ENCODE measurements at regions of chr9 and their contacts with region 1.

Region 1: DNA sequence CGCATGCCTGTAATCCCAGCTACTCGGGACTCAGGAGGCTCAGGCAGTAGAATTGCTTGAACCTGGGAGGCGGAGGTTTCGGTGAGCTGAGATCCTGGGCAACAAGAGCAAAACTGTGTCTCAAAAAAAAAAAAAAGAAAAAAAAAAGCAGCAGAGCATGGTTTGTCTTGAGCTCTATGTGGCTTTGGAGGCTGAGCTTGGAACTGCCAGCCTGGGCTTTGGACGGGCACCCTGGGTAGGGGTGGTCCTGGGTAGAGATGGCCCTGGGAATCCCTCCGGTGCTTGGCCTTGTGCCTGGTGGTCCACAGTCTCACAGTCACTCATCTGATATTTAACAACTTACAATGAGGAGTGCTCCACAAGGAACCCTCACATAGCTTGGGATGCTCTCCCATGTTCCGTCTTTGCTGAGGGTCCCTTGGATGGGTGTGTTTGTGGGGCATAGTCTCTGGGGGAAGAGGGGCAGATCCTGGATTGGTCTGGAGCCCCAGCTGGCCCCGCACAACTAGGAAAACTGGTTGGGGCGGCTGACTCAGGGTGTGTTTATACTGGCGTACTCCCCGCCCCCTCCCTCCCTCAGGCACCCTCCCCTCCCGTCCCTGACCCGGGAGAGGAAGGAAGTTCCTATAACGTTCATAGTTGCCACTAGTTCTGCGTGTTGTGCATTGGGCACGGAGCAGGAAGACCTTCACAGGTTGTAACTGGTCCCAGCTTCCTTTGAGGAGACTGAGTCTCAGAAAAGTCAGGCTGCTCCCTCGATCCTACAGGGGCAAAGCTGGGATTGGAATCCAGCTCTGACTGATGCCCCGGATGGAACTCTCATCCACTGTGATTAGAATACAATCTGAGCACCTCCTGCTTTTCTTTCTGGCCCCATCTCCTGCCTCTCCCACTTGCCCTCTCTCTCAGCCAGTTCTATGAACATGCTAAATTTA is 11.2 kb downstream of the IER5L start:
- DNase-seq: peak; percentile 89 to 90
- H3K4me3 ChIP-seq: peak overlapping the region; percentile 56; the same call in 1 of the 2 replicates
- H3K27ac ChIP-seq: peak overlapping the region; percentile 90
- H3K4me1 ChIP-seq: peaks cover 43% of the 10 kb centered on the region
- H3K27me3 ChIP-seq: no peaks in the 10 kb centered on the region
- CTCF ChIP-seq: no peak

Region 2: GRCh38 chr9:129071526-129072131 is 95.3 kb before region 1 on chr9:
- CTCF ChIA-PET with region 1: no interaction called
- POLR2A ChIA-PET with region 1: no interaction called
- intact Hi-C with region 1: no loop called
- DNase-seq: peak in 1 of 2 experiments; percentile 29
- H3K4me3 ChIP-seq: no peak overlapping the region
- H3K27ac ChIP-seq: no peak overlapping the region
- H3K4me1 ChIP-seq: no peaks in the 10 kb centered on the region
- H3K27me3 ChIP-seq: no peaks in the 10 kb centered on the region
- CTCF ChIP-seq: no peak

Region 3: DNA sequence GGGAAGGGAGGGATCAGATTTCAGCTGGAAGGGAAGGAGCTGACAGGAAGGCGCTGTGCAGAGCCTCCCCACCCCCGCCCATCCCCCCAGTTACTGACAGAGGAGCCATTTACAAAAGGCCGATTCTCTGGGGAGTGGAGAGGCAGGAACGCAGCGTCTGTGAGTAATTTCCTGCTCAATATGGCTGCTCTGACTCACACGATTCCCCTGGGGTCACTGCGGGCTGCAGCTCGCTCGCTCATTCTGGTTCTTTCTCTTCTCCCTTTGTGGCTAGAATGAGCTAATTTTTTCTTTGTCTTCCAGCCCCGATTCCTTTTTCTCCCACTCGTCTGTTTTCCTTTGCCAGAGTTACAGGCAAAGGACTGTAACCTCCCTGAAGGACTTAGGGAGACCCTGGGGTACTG is 26.9 kb before region 1 on chr9:
- CTCF ChIA-PET with region 1: interaction called, 36 read pairs
- POLR2A ChIA-PET with region 1: interaction called, 21 read pairs
- intact Hi-C with region 1: loop called (anchors 1 kb)
- DNase-seq: peak; percentile 85 to 95
- H3K4me3 ChIP-seq: peak overlapping the region; percentile 91
- H3K27ac ChIP-seq: peak overlapping the region; percentile 100
- H3K4me1 ChIP-seq: peaks cover 43% of the 10 kb centered on the region
- H3K27me3 ChIP-seq: no peaks in the 10 kb centered on the region
- CTCF ChIP-seq: no peak

Region 4: DNA sequence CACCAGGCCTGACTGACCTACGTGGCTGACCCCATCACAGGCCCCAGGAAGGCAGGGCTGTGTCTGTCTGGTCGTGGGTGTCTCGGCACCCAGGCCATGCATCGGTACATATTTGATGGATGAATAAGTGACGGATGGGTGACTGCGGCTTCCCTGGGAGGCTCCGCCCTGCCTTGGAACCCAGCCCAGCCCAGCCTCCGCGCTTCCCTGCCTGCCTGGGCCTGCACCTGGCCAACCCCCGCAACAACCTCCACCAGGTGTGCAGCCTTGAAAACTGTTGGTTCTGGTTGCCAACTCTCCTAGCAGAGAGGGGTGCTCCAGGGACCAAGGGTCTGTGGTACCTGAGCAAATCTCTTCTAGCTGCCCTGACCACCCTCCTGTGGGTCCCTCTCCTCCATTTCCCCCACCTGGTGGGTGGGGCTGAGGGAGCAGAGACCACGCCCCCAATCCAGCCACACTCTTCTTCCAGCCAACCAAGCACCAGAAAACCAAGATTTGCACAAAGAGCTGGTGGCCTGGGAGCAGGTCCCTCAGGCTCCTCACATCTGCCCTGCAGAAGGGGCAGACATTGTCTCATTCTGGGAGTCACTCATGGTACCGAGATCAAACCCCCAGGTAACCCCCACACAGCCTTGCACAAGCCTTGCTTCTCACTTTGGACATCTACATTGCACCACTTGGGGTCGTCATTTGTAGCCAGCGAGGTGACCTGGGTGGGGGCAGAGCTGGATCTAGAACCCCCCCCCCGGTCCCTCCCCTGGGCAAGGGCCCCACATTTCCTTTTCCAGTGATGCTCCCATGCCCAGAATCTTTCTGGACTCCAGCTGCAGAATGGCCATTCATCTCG is 111.7 kb after region 1 on chr9:
- CTCF ChIA-PET with region 1: interaction called, 3 read pairs
- POLR2A ChIA-PET with region 1: interaction called, 14 read pairs
- intact Hi-C with region 1: no loop called
- DNase-seq: peak; percentile 86 to 97
- H3K4me3 ChIP-seq: peak overlapping the region; percentile 58; the same call in 1 of the 2 replicates
- H3K27ac ChIP-seq: peak overlapping the region; percentile 79
- H3K4me1 ChIP-seq: peaks cover 51% of the 10 kb centered on the region
- H3K27me3 ChIP-seq: no peaks in the 10 kb centered on the region
- CTCF ChIP-seq: no peak

Region 5: DNA sequence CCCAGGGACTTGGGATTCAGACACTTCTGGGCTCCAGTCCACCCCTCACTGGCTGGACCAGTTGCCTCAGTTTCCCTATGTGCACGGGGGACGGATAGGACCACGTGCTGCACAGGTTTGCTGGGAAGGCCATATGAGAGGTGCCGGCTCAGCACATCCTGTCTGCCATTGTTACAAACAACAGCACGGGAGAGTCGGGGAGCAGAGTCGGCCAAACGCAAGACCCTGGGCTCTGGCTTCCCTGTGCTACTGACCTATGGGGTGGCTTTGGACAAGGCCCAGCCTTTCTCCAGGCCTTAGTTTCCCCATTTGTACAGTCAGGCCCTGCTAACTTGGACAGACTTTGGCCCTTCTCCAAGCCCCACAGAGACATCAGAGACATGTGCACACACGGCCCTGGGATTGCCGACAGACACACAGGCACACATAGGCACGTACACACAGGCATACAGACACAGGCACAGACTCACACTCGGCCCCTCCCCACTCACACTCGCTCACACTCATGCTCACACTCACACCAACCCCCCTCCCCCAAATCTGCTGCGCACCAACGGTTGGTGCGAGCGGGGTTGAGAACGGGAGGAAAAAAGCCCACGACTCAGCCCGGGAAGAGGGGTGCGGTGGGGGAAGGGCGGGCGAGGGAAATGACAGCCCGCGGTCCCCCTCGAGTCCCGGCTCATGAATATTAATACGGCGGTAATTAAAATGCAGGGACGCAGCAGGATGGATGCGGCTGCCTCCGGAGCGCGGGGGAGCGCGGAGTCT is 320.9 kb after region 1 on chr9:
- CTCF ChIA-PET with region 1: no interaction called
- POLR2A ChIA-PET with region 1: interaction called, 16 read pairs
- intact Hi-C with region 1: no loop called
- DNase-seq: no peak
- H3K4me3 ChIP-seq: peak overlapping the region; percentile 66
- H3K27ac ChIP-seq: peak overlapping the region; percentile 91
- H3K4me1 ChIP-seq: peaks cover 72% of the 10 kb centered on the region
- H3K27me3 ChIP-seq: no peaks in the 10 kb centered on the region
- CTCF ChIP-seq: no peak

Region 6: DNA sequence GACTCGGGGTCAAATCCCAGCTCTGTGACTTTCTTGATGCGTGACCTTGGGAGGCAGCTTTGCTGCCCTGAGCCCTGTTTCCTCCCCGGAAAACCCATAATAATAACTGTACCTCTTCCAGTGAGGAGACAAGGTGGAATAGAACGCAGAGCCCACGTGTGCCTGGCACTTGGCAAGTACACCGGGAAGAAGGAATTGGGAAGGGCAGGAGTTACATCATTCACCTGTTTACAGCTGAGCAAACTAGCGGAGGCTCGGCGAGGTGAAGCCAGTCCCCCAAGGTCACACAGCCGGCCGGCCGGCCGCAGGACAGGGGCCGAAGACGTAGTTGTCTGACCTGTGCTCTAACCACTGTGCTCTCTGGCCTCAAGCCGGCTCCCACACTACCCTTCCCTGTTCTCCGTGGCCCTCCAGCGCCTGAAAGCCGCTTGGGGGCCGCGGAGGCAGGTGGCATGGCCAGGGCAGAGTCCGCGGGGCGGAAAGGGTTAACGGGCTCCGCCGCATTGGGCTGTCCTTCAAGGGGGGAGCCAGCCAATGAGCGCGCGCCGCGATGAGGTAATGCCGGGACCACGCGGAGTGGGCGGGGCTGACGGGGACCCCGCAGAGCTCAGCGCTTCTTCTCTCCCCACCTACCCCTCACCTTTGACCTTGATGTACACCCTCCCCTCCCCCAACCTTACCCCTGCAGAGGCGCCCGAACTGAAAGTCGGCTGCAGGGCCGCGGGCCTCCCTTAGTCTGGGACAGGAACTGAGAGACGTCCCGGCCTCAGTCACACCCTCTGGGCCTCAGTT is 328.8 kb after region 1 on chr9:
- CTCF ChIA-PET with region 1: no interaction called
- POLR2A ChIA-PET with region 1: interaction called, 22 read pairs
- intact Hi-C with region 1: no loop called
- DNase-seq: peak; percentile 78 to 95
- H3K4me3 ChIP-seq: peak overlapping the region; percentile 60
- H3K27ac ChIP-seq: peak overlapping the region; percentile 64
- H3K4me1 ChIP-seq: peaks cover 52% of the 10 kb centered on the region
- H3K27me3 ChIP-seq: no peaks in the 10 kb centered on the region
- CTCF ChIP-seq: no peak